Mammary epithelial cell (primary cell): ENCODE measurements at regions of chr2 and their contacts with region 1.

Region 1: GRCh38 chr2:234135720-234136221 is 85.3 kb downstream of the SPP2 start:
- DNase-seq: peak; percentile 80
- H3K4me3 ChIP-seq: no peak overlapping the region
- H3K27ac ChIP-seq: peak overlapping the region; percentile 70
- H3K4me1 ChIP-seq: peaks cover 83% of the 10 kb centered on the region
- H3K27me3 ChIP-seq: no peaks in the 10 kb centered on the region
- CTCF ChIP-seq: peak; percentile 82 to 84

Region 2: DNA sequence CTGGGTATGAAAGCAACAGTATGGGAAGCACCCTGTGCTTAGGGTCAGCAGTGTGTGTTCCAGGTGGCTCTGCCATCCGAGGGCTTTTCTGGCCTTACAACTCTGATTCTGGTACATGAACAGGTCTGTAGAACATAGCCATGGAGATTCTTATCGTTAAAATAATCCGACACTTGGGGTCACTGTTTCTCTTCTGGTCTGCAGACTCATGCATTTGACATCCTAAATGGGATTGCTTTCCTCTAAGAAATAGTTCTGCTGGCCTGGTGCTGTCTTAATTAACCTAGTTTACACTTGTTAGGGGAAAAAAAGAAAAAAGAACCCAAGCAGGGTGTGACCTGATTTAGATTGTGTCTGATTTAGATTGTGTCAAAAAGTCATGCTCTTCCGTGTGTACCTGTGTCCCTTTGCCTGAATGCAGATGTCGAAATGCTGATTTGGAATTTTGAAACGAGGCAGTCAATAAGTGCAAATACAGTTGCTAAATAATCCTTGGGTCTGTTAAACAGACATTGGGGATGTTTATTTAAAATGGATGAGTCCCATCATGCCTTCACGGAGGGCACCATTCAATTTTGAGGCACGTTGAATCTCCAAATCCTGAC is 159.0 kb before region 1 on chr2:
- CTCF ChIA-PET with region 1: no interaction called
- dilution Hi-C with region 1: no loop called
- in situ Hi-C with region 1: loop called in 1 of 2 experiments (anchors 10 kb)
- intact Hi-C with region 1: loop called (anchors 1 kb)
- DNase-seq: peak; percentile 70
- H3K4me3 ChIP-seq: no peak overlapping the region
- H3K27ac ChIP-seq: no peak overlapping the region
- H3K4me1 ChIP-seq: peaks cover 61% of the 10 kb centered on the region
- H3K27me3 ChIP-seq: no peaks in the 10 kb centered on the region
- CTCF ChIP-seq: peak; percentile 60 to 64

Region 3: DNA sequence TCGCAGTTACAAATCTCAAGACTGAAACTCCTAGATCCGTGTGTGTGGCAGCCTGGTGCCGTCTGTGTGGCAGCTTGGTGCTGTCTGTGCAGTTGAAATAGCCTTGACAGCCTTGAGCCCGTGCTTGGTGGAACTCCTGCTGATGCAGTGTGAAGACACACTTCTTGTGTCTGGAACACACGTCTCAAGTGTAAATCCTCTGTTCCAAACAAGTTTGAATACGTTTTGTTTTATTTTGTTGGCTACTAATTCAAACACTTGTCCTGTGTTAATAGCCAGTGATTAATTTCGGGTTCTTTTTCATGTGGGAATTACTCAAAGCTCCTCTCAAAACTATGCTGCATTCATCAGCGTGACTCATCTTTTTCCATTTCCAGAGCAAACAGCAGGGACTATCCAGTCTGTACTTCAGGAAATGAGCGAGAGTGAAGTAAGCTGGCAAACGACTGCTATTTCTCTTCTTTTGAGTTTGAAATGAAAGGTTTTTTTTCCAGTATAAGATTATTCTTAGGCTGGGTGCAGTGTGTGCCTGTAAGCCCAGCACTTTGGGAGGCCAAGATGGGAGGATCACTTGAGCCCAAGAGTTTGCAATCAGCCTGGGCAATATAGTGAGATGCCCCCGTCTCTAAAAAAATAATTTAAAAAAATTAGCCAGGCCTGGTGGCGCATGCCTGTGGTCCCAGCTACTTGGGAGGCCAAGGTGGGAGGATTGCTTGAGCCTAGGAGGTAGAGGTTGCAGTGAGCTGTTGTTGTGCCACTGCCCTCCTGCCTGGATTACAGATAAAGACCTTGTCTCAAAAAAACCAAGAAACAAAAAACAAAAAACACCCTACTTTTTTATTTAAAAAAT is 67.6 kb after region 1 on chr2:
- CTCF ChIA-PET with region 1: interaction called, 4 read pairs
- dilution Hi-C with region 1: no loop called
- in situ Hi-C with region 1: no loop called
- intact Hi-C with region 1: loop called (anchors 1 kb)
- DNase-seq: peak; percentile 99
- H3K4me3 ChIP-seq: no peak overlapping the region
- H3K27ac ChIP-seq: peak overlapping the region; percentile 67
- H3K4me1 ChIP-seq: peaks cover 16% of the 10 kb centered on the region
- H3K27me3 ChIP-seq: no peaks in the 10 kb centered on the region
- CTCF ChIP-seq: no peak

Region 4: GRCh38 chr2:234288974-234289455 is 153.2 kb after region 1 on chr2:
- CTCF ChIA-PET with region 1: no interaction called
- dilution Hi-C with region 1: no loop called
- in situ Hi-C with region 1: no loop called
- intact Hi-C with region 1: loop called (anchors 1 kb)
- DNase-seq: peak; percentile 24
- H3K4me3 ChIP-seq: no peak overlapping the region
- H3K27ac ChIP-seq: no peak overlapping the region
- H3K4me1 ChIP-seq: peaks cover 32% of the 10 kb centered on the region
- H3K27me3 ChIP-seq: no peaks in the 10 kb centered on the region
- CTCF ChIP-seq: peak; percentile 61 to 78

Region 5: GRCh38 chr2:234406085-234406484 is 270.3 kb after region 1 on chr2:
- CTCF ChIA-PET with region 1: no interaction called
- dilution Hi-C with region 1: no loop called
- in situ Hi-C with region 1: no loop called
- intact Hi-C with region 1: loop called (anchors 1 kb)
- DNase-seq: no peak
- H3K4me3 ChIP-seq: no peak overlapping the region
- H3K27ac ChIP-seq: no peak overlapping the region
- H3K4me1 ChIP-seq: no peaks in the 10 kb centered on the region
- H3K27me3 ChIP-seq: no peaks in the 10 kb centered on the region
- CTCF ChIP-seq: peak in 1 of 2 donors; percentile 37

Region 6: GRCh38 chr2:234494361-234495250 is 358.8 kb after region 1 on chr2:
- CTCF ChIA-PET with region 1: no interaction called
- dilution Hi-C with region 1: no loop called
- in situ Hi-C with region 1: loop called (anchors 5 kb)
- intact Hi-C with region 1: loop called (anchors 1 kb)
- DNase-seq: peak; percentile 59
- H3K4me3 ChIP-seq: peak overlapping the region; percentile 86 to 99 (median 97)
- H3K27ac ChIP-seq: peak overlapping the region; percentile 92
- H3K4me1 ChIP-seq: peaks cover 22% of the 10 kb centered on the region
- H3K27me3 ChIP-seq: no peaks in the 10 kb centered on the region
- CTCF ChIP-seq: no peak

Region 7: DNA sequence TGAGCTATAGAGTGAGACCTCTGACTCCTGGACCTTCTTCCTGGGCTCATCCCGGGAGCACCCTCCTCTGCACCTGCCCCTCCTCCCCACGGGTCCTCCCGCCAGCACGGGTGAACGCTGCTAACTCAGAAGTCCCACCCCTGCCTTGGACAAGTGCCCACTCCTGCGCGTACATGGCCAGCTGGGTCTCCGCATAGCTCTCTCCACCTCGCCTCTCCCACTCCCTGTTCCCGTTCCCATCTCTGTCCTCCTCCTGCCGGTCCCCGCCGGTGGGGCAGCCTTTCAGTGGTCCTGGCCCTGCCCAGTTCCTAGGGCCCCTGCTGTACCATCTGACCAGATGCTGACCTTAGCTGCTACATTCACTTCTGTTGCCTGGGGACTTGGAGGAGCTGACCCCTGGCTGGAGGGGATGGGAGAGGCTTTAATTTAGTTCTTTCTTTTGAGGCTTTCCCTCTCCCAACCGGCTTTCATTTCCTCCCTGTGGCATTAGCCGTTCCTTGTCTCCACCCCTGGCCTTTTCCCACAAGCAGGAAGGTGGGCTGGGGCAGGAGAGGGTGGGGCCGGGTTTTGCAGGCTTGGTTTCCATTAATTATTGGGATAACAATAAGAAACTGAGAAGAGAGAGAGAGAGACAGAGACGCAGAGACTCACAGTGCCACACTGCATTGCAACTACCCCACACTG is 952.2 kb after region 1 on chr2:
- CTCF ChIA-PET with region 1: no interaction called
- dilution Hi-C with region 1: no loop called
- in situ Hi-C with region 1: loop called in 1 of 2 experiments (anchors 25 kb)
- intact Hi-C with region 1: no loop called
- DNase-seq: no peak
- H3K4me3 ChIP-seq: no peak overlapping the region
- H3K27ac ChIP-seq: no peak overlapping the region
- H3K4me1 ChIP-seq: no peaks in the 10 kb centered on the region
- H3K27me3 ChIP-seq: no peaks in the 10 kb centered on the region
- CTCF ChIP-seq: no peak